Activated CD8-positive, alpha-beta memory T cell treated with anti-CD3 and anti-CD28 coated beads, Interleukin-2, amount 10 ng/mL, durations not matched to agents 7 days and 5 days (primary cell): ENCODE measurements at regions of chr2 and their contacts with region 1.

Region 1: DNA sequence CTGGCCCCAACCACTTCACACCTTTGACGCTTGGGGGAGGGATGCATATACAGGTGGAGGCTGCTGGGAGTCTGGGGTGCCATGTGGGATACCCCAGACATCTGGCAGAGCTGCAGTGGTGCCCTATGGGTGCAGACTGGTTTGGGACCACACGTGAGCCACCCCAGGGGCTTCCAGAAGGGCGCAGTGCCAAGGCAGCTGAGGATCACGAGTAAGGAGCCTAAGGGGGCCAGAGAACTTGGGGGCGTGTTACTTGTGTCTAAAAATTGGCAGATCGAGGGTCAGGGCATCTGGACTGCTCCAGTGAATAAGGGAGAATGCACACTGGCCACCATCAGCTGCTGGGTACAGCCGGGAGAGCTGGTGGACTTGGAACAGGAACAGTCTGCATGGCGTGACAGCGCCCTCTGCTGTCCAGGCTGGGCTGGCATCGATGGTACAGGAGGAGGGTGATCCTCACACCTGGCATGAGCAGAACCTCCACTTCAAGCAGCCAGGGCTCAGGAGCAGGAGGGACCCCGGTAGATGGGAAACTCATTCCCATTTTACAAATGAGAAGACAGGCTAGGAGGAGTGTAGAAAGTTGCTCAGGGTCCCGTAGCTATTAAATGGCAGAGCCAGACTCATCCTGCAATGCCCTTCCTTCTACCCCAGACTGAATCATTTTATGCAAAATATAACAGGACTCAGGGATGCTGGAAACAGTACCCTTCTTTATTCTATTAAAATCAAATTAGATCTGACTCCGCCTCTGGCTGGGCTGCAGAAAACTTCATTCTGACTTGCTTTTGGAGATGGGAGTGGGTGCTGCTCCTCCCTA is 60.4 kb downstream of the ATOH8 start:
- DNase-seq: peak; percentile 89
- ATAC-seq: peak; percentile 98
- H3K4me3 Mint-ChIP-seq: no peak overlapping the region
- H3K27ac Mint-ChIP-seq: no peak overlapping the region
- H3K4me1 Mint-ChIP-seq: no peaks in the 10 kb centered on the region
- H3K27me3 Mint-ChIP-seq: peaks cover 26% of the 10 kb centered on the region

Region 2: DNA sequence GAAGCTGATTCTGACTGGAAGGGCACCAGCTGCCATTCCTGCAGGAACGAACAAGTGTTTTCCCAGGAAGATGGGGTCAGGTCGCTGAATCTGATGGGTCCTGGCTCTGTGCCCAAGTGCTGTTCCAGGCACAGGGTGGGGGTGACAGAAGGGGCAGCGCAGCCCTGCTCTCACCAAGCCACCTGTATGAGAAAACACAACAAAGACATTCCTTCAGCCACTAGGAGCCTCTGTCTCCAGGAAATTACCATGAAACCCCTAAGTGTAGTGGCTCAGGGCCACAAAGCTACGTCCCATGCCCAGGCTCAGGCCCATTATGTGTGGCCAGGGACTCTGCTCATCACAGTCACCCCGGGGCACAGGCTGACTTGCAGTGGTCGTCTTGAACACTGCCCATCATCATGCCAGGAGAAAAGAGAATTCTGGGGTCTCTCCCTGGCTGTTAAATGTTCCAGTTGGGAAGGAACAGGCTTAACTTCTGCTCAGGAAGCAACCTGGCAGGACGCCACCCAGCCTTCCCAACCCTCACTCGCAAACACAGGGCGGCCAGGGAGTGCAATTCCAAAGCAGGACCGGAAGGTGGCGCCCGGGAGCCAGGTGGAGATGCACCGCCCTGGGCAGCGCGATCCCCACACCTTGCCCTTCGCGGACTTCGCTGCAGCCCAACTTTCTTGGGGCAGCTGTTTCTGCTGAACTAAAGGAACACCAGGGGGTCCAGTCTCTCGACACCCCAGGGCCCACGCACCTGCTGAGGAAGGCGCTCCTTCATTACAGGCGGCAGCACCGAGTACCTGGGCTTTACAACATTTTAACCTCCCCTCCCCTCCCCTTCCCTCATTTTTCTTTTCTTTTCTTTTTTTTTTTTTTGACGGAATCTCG is 135.2 kb before region 1 on chr2:
- CTCF ChIA-PET with region 1: interaction called, 18 read pairs
- DNase-seq: peak; percentile 84
- ATAC-seq: peak; percentile 88
- H3K4me3 Mint-ChIP-seq: no peak overlapping the region
- H3K27ac Mint-ChIP-seq: peak overlapping the region; percentile 34
- H3K4me1 Mint-ChIP-seq: peaks cover 32% of the 10 kb centered on the region
- H3K27me3 Mint-ChIP-seq: peaks cover 12% of the 10 kb centered on the region

Region 3: GRCh38 chr2:85741833-85742455 is 72.2 kb before region 1 on chr2:
- CTCF ChIA-PET with region 1: interaction called, 130 read pairs
- DNase-seq: no peak
- ATAC-seq: no peak
- H3K4me3 Mint-ChIP-seq: no peak overlapping the region
- H3K27ac Mint-ChIP-seq: no peak overlapping the region
- H3K4me1 Mint-ChIP-seq: no peaks in the 10 kb centered on the region
- H3K27me3 Mint-ChIP-seq: peaks cover 83% of the 10 kb centered on the region

Region 4: DNA sequence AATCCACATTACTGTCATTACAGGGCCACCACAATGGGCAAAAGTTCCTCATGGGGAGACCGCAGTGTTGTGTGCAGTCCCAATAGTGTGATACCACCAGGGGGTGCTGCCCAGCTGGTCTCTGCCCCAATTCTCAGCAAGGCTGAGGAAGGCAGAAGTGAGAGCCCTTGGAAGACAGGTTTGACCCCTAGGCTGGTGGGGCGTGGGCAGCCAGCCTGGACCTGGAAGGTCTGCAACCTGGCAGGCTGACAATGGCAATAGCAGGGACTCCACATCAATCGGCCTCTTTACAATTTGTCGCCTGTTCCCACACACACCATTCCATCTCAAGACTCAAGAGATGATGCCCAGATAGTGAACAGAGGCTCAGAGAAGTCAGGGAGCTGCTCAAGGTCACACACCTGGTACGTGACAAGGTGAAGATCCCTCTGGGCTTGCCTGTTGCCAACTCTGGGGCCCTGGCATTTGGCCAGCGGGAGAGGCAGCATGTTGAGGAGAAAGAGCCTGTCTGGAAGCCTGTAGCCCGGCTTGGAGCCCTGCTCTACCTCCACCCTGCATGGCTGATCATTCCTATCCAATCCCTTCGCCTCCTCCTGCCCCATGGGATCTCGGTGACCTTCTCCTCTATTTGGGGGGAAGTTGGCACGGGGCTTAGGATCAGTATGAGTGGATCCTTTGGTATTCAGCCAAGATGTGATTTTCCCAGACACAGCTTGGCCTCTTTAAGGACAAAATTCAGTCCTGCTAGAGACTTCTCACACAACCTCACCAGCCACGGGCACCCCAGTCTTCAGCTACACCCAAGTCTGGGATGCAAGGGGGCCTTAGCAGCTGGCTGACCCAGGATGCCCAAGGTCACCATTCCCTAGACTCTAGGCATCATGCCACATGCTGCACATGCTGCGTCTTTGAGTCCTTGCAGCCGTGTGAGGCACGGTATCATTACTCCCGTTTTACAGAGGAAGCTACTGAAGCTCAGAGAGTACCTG is 63.3 kb before region 1 on chr2:
- CTCF ChIA-PET with region 1: interaction called, 130 read pairs
- DNase-seq: peak; percentile 72
- ATAC-seq: peak; percentile 45
- H3K4me3 Mint-ChIP-seq: no peak overlapping the region
- H3K27ac Mint-ChIP-seq: no peak overlapping the region
- H3K4me1 Mint-ChIP-seq: peaks cover 13% of the 10 kb centered on the region
- H3K27me3 Mint-ChIP-seq: peaks cover 75% of the 10 kb centered on the region

Region 5: DNA sequence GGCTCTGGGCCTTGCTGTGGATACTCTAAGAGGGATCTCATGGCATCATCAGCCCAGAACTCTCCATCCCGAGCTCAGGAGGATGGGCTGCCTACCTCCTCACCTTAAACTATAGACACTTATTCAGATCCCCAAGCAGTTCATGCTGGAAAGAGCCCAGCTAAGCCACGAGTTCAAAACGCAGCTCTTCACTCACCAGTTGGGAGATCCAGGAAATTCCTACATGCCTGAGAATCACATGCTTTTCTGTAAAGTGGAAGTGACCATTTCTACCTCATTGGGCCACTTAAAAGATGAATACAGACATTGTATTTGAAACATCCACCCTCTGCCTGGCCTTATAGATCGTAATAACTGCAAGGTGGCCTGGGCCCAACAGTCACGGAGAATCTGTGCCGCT is 53.8 kb before region 1 on chr2:
- CTCF ChIA-PET with region 1: interaction called, 13 read pairs
- DNase-seq: no peak
- ATAC-seq: no peak
- H3K4me3 Mint-ChIP-seq: no peak overlapping the region
- H3K27ac Mint-ChIP-seq: no peak overlapping the region
- H3K4me1 Mint-ChIP-seq: peaks cover 2% of the 10 kb centered on the region
- H3K27me3 Mint-ChIP-seq: peaks cover 57% of the 10 kb centered on the region

Region 6: DNA sequence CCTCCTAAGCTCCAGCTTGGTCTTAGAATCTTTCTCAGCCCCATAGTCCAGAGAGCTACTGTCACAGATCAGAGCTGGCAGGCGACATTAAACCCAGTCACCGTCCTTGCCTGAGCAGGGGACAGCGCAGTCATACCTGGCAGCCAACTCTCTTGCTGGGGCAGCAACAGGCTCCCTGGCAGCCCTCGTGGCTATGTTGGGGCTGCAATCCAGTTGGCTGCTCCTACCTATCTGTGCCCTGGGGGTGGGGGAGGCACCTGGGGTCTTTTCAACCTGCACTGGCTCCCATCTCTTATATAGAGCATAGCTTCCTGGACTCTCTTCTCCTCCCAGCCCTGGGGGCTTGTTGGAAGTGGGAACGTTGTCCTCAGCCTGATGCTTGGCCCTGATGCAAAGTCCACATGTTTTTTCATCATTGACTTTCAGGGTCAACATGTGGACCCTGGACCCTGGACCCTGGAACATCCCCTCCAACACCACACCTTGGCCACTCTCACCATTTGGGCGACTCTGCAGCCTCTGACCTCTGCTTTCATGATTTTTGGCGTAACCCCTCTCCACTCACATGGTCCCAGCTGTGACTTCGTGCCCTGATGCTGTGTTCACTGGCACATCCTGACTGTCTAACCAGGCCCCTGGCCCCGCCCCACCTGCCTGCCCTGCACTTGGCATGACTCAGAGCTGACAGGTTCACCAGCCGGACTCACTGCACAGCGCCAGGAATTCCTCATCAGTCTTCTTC is 14.8 kb before region 1 on chr2:
- CTCF ChIA-PET with region 1: interaction called, 17 read pairs
- DNase-seq: no peak
- ATAC-seq: no peak
- H3K4me3 Mint-ChIP-seq: no peak overlapping the region
- H3K27ac Mint-ChIP-seq: no peak overlapping the region
- H3K4me1 Mint-ChIP-seq: peaks cover under 1% of the 10 kb centered on the region
- H3K27me3 Mint-ChIP-seq: peaks cover 35% of the 10 kb centered on the region

Region 7: DNA sequence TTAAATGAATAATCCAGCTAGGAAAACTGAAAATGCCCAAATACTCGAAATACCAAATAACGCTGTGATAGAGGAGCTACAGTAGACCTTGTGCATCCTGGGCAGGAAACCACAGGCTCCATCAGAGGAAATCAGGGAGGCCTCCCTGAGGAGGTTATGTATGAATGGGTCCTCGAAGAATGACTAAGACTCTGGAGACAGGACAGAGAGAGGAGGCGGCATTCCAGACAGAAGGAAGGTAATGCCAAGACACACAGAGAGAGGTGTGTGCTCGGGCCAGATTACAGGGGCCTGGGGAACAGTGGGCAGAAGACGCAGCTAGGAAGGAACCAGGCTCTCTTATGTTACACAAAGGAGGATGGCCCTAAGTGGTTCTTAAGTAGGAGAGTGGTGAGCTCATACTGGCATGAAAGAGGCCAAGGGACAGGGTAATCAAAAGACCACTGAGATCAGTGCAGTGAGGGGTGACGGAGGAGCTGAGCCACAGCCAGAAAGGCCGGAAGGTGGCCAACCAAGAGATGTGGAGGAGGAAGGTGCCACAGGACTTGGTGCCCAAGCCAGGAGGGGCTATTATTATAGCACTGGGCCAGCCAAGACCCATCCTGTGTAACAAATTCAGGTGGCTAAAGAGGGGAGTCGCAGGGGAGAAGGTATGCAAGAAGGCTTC is 64.7 kb after region 1 on chr2:
- CTCF ChIA-PET with region 1: no interaction called
- DNase-seq: no peak
- ATAC-seq: no peak
- H3K4me3 Mint-ChIP-seq: no peak overlapping the region
- H3K27ac Mint-ChIP-seq: no peak overlapping the region
- H3K4me1 Mint-ChIP-seq: peaks cover 52% of the 10 kb centered on the region
- H3K27me3 Mint-ChIP-seq: no peaks in the 10 kb centered on the region